HCT116 (cell line): ENCODE measurements at regions of chr5 and their contacts with region 1.

Region 1: GRCh38 chr5:42908509-42909488 is 97.1 kb upstream of the SELENOP start:
- DNase-seq: peak; percentile 76
- ATAC-seq: peak; percentile 93
- H3K4me3 ChIP-seq: no peak overlapping the region
- H3K27ac ChIP-seq: no peak overlapping the region
- H3K4me1 ChIP-seq: peaks cover 0 to 12% of the 10 kb centered on the region in 2 experiments; a peak in 3 of 4 replicates
- H3K27me3 ChIP-seq: no peaks in the 10 kb centered on the region
- CTCF ChIP-seq: peak; percentile 51 to 76 (median 76); a peak in 5 of 6 replicates
- POLR2A ChIP-seq: no peak
- RAD21 ChIP-seq: peak; percentile 60

Region 2: GRCh38 chr5:42889311-42889933 is 19.4 kb before region 1 on chr5:
- CTCF ChIA-PET with region 1: interaction called, 11 read pairs
- POLR2A ChIA-PET with region 1: no interaction called
- RAD21 ChIA-PET with region 1: interaction called, 4 to 5 read pairs
- intact Hi-C with region 1: no loop called
- DNase-seq: peak; percentile 66
- ATAC-seq: peak; percentile 94
- H3K4me3 ChIP-seq: no peak overlapping the region
- H3K27ac ChIP-seq: no peak overlapping the region
- H3K4me1 ChIP-seq: peaks cover 0 to 4% of the 10 kb centered on the region in 2 experiments; a peak in 2 of 4 replicates
- H3K27me3 ChIP-seq: peaks cover 5% of the 10 kb centered on the region
- CTCF ChIP-seq: peak; percentile 52 to 93 (median 86); a peak in 5 of 6 replicates
- POLR2A ChIP-seq: no peak
- RAD21 ChIP-seq: peak; percentile 85

Region 3: DNA sequence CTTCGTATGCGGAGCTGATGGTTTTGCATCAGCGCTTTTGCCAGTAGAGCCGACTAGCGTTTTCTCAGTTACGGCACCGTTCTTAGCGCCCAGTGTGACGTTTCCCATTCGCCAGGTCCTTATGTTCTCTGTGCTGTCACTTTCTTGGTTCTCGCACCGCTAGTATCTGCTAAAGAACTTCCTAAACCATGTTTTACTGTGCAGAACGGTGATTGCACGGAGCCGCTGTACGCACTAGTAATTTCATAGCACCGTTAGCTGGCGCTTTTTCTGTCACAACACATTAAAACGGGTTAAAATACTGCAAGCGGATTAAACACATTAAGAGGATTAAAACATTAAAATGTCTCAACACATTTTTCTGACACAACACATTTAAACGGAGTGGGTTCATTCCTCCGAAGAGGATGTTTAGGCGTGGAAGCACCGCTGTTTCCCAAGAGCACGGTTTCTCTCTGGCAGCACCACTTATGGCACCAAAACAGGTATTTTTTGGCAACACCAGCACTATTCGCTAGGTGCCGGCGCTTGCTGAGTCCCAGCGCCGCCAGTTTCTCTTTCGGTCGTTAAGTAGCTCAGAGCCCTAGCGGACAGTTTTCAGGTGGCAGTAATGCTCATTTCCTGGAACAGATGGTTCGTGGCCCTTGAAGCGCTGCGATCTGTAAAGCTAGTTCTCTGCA is 111.0 kb after region 1 on chr5:
- CTCF ChIA-PET with region 1: interaction called, 18 read pairs
- POLR2A ChIA-PET with region 1: interaction called, 5 read pairs
- RAD21 ChIA-PET with region 1: no interaction called
- intact Hi-C with region 1: no loop called
- DNase-seq: peak; percentile 87
- ATAC-seq: peak; percentile 81
- H3K4me3 ChIP-seq: peak overlapping the region; percentile 67 to 68
- H3K27ac ChIP-seq: no peak overlapping the region
- H3K4me1 ChIP-seq: peaks cover 4 to 27% of the 10 kb centered on the region in 2 experiments; a peak in 3 of 4 replicates
- H3K27me3 ChIP-seq: no peaks in the 10 kb centered on the region
- CTCF ChIP-seq: peak; percentile 29 to 65 (median 55); a peak in 5 of 6 replicates
- POLR2A ChIP-seq: no peak
- RAD21 ChIP-seq: peak; percentile 19; the same call in 1 of the 2 replicates

Region 4: GRCh38 chr5:43066799-43067741 is 158.3 kb after region 1 on chr5:
- CTCF ChIA-PET with region 1: interaction called, 9 read pairs
- POLR2A ChIA-PET with region 1: no interaction called
- RAD21 ChIA-PET with region 1: interaction called in 1 of 2 experiments, 3 read pairs
- intact Hi-C with region 1: loop called (anchors 2 kb)
- DNase-seq: peak; percentile 85
- ATAC-seq: peak; percentile 63
- H3K4me3 ChIP-seq: peak overlapping the region; percentile 76 to 77
- H3K27ac ChIP-seq: peak overlapping the region; percentile 93
- H3K4me1 ChIP-seq: peaks cover 12 to 24% of the 10 kb centered on the region in 2 experiments
- H3K27me3 ChIP-seq: no peaks in the 10 kb centered on the region
- CTCF ChIP-seq: no peak
- POLR2A ChIP-seq: peak; percentile 32
- RAD21 ChIP-seq: no peak

Region 5: GRCh38 chr5:43179836-43180235 is 271.0 kb after region 1 on chr5:
- CTCF ChIA-PET with region 1: no interaction called
- POLR2A ChIA-PET with region 1: no interaction called
- RAD21 ChIA-PET with region 1: no interaction called
- intact Hi-C with region 1: no loop called
- DNase-seq: no peak
- ATAC-seq: no peak
- H3K4me3 ChIP-seq: no peak overlapping the region
- H3K27ac ChIP-seq: no peak overlapping the region
- H3K4me1 ChIP-seq: no peaks in the 10 kb centered on the region
- H3K27me3 ChIP-seq: no peaks in the 10 kb centered on the region
- CTCF ChIP-seq: no peak
- POLR2A ChIP-seq: no peak
- RAD21 ChIP-seq: no peak

Region 6: GRCh38 chr5:43227655-43228054 is 318.9 kb after region 1 on chr5:
- CTCF ChIA-PET with region 1: interaction called, 4 read pairs
- POLR2A ChIA-PET with region 1: no interaction called
- RAD21 ChIA-PET with region 1: no interaction called
- intact Hi-C with region 1: loop called (anchors 5 kb)
- DNase-seq: peak; percentile 47
- ATAC-seq: peak; percentile 72
- H3K4me3 ChIP-seq: no peak overlapping the region
- H3K27ac ChIP-seq: no peak overlapping the region
- H3K4me1 ChIP-seq: no peaks in the 10 kb centered on the region
- H3K27me3 ChIP-seq: no peaks in the 10 kb centered on the region
- CTCF ChIP-seq: peak; percentile 42 to 87 (median 59); a peak in 5 of 6 replicates
- POLR2A ChIP-seq: no peak
- RAD21 ChIP-seq: peak; percentile 75

Region 7: DNA sequence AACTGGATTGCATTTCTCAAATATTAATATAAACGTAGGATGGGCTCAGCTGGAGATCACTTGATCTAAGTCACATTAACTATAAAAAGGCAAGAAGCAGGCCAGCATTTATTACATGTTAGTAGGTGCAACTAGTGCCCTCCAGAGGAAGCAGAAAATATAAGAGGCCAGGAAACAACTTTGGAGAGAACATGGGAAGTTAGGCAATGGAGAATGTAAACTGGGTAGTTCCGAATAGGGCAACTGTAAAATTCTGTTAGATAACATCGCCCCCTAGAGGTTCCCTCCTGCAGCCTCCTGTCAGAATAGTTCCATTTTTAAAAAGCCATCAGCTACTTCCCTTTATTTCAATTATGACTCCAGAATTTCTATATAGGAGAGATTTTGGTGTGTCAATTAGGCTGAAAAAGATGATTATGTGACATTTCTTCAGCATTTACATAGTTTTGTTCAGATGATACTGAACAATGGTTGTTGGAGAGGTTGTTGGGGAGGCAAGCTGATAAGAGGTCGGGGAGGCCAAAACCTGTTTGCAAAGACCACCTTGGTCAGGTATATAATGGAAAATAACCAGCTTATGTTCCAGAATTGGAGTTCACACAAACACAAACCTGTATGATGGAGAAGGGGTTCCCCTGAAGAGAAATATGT is 481.0 kb after region 1 on chr5:
- CTCF ChIA-PET with region 1: interaction called, 17 read pairs
- POLR2A ChIA-PET with region 1: no interaction called
- RAD21 ChIA-PET with region 1: interaction called in 1 of 2 experiments, 4 read pairs
- intact Hi-C with region 1: loop called (anchors 1 kb)
- DNase-seq: peak; percentile 84
- ATAC-seq: peak; percentile 94
- H3K4me3 ChIP-seq: no peak overlapping the region
- H3K27ac ChIP-seq: no peak overlapping the region
- H3K4me1 ChIP-seq: peaks cover 0 to 10% of the 10 kb centered on the region in 2 experiments; a peak in 2 of 4 replicates
- H3K27me3 ChIP-seq: no peaks in the 10 kb centered on the region
- CTCF ChIP-seq: peak; percentile 90 to 98 (median 92)
- POLR2A ChIP-seq: no peak
- RAD21 ChIP-seq: peak; percentile 93